Activated CD8-positive, alpha-beta T cell treated with anti-CD3 and anti-CD28 coated beads for 36 hours (primary cell): ENCODE measurements at regions of chr19 and their contacts with region 1.

Region 1: GRCh38 chr19:42657556-42657955 is 62.8 kb upstream of the CEACAM8 start:
- DNase-seq: no peak
- ATAC-seq: no peak
- H3K4me3 Mint-ChIP-seq: no peak overlapping the region
- H3K27ac Mint-ChIP-seq: no peak overlapping the region
- H3K4me1 Mint-ChIP-seq: no peaks in the 10 kb centered on the region
- H3K27me3 Mint-ChIP-seq: peaks cover 12% of the 10 kb centered on the region
- CTCF ChIP-seq: no peak

Region 2: DNA sequence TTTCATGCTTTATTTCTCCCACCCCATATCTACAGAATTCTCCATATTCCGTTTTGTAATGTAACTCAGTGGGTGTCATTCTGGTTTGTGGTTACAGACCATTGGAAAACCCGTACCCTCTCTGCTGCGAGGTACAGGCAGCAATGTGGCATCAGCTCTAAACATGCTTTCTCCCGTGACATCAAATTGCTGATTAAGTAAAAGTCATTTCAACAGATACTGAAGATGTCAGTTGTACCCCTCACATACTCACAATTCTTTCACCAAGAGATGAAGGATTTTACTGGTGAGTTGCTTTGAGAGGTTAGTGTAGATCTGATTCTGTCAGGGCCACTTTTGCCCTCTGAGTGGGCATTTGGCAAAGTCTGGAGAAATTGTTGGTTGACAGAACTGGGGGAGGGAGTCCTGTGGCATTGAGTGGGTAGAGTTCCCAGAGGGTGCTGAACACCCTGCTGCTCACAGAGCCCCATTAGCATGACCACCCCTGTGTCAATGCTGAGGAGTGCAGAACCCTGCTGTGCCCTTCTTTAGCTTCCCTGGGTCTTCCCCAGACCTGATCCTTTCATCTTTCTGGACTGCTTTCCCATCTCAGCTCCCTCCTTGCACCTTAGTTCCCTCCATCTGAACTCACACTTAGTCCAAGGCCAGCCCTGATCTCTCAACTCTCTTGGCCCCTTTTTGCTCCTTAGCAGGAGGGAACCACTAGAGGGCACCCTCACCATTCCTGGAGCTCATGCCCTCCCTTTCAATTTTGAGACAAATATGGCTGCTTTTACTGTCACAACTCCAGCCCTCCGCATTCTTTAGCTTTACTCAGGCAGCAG is 22.9 kb before region 1 on chr19:
- CTCF ChIA-PET with region 1: interaction called, 20 read pairs
- POLR2A ChIA-PET with region 1: no interaction called
- intact Hi-C with region 1: no loop called
- DNase-seq: peak; percentile 68
- ATAC-seq: peak; percentile 51
- H3K4me3 Mint-ChIP-seq: no peak overlapping the region
- H3K27ac Mint-ChIP-seq: peak overlapping the region; percentile 10
- H3K4me1 Mint-ChIP-seq: peaks cover 7% of the 10 kb centered on the region
- H3K27me3 Mint-ChIP-seq: peaks cover 13% of the 10 kb centered on the region
- CTCF ChIP-seq: peak; percentile 78